Natural killer cell (primary cell): ENCODE measurements at regions of chr2 and their contacts with region 1.

Region 1: GRCh38 chr2:223993621-223994232 is 36.5 kb downstream of the MRPL44 start:
- DNase-seq: peak; percentile 35 to 84
- ATAC-seq: peak; percentile 77 to 91 (median 83)
- H3K4me3 ChIP-seq: no peak overlapping the region
- H3K4me3 Mint-ChIP-seq: no peak overlapping the region
- H3K27ac ChIP-seq: no peak overlapping the region
- H3K27ac Mint-ChIP-seq: no peak overlapping the region
- H3K4me1 ChIP-seq: no peaks in the 10 kb centered on the region
- H3K4me1 Mint-ChIP-seq: no peaks in the 10 kb centered on the region
- H3K27me3 ChIP-seq: no peaks in the 10 kb centered on the region
- H3K27me3 Mint-ChIP-seq: no peaks in the 10 kb centered on the region
- CTCF ChIP-seq: peak; percentile 70

Region 2: GRCh38 chr2:223123855-223124610 is 869.7 kb before region 1 on chr2:
- intact Hi-C with region 1: no loop called
- DNase-seq: no peak
- ATAC-seq: no peak
- H3K4me3 ChIP-seq: no peak overlapping the region
- H3K4me3 Mint-ChIP-seq: no peak overlapping the region
- H3K27ac ChIP-seq: no peak overlapping the region
- H3K27ac Mint-ChIP-seq: no peak overlapping the region
- H3K4me1 ChIP-seq: no peaks in the 10 kb centered on the region
- H3K4me1 Mint-ChIP-seq: no peaks in the 10 kb centered on the region
- H3K27me3 ChIP-seq: no peaks in the 10 kb centered on the region
- H3K27me3 Mint-ChIP-seq: no peaks in the 10 kb centered on the region
- CTCF ChIP-seq: no peak

Region 3: GRCh38 chr2:223970343-223971128 is 23.2 kb before region 1 on chr2:
- intact Hi-C with region 1: loop called (anchors 1 kb)
- DNase-seq: peak in 1 of 2 donors; percentile 82
- ATAC-seq: peak; percentile 73 to 79 (median 78)
- H3K4me3 ChIP-seq: no peak overlapping the region
- H3K4me3 Mint-ChIP-seq: no peak overlapping the region
- H3K27ac ChIP-seq: no peak overlapping the region
- H3K27ac Mint-ChIP-seq: peak overlapping the region in 1 of 2 donors; percentile 22
- H3K4me1 ChIP-seq: no peaks in the 10 kb centered on the region
- H3K4me1 Mint-ChIP-seq: peaks cover 9 to 11% of the 10 kb centered on the region in 2 donors
- H3K27me3 ChIP-seq: no peaks in the 10 kb centered on the region
- H3K27me3 Mint-ChIP-seq: no peaks in the 10 kb centered on the region
- CTCF ChIP-seq: peak; percentile 97

Region 4: GRCh38 chr2:224038049-224038829 is 44.5 kb after region 1 on chr2:
- intact Hi-C with region 1: loop called (anchors 1 kb)
- DNase-seq: peak; percentile 40 to 56
- ATAC-seq: peak; percentile 62 to 67 (median 65)
- H3K4me3 ChIP-seq: peak overlapping the region; percentile 46
- H3K4me3 Mint-ChIP-seq: peak overlapping the region; percentile 95
- H3K27ac ChIP-seq: no peak overlapping the region
- H3K27ac Mint-ChIP-seq: peak overlapping the region; percentile 22 to 71
- H3K4me1 ChIP-seq: peaks cover 15% of the 10 kb centered on the region
- H3K4me1 Mint-ChIP-seq: peaks cover 21 to 33% of the 10 kb centered on the region in 2 donors
- H3K27me3 ChIP-seq: peaks cover 6% of the 10 kb centered on the region
- H3K27me3 Mint-ChIP-seq: peaks cover 28 to 41% of the 10 kb centered on the region in 2 donors
- CTCF ChIP-seq: no peak

Region 5: DNA sequence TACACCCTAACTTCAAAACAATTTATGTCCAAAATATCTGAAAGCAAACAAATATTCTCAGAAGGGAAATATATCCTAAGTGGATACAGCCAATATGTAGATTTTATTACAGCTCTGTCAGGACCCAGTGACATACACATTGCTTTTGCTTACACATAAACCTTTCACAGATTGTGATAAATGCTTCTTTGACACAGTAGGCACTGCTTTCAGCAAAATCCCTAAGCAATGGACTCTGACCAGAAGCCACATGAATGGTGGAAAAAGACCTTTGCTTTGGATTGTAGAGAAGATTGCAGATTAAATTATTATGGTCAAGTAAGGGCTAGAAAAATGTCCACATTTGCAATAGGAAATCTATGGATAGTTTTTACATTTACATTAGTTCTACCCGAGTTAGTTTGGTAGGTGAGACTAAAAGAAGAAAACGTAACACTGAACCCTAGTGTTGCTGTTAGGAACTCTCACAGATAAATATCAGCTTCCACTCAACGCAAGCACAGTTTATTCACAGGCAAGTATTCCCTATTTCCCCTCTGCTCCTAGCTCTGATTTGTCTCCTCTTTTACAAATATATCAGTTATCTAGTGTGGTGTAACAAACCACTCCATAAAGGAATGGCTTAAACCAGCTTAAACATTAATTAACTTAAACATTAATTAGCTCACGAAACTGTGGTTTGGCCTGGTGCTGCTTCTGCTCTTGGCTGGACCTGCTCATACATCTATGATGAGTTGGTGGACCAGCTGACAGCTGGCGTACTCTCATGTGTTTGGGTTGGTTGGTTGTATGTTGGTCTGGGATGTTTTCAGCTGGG is 69.0 kb after region 1 on chr2:
- intact Hi-C with region 1: loop called (anchors 2 kb)
- DNase-seq: peak in 1 of 2 donors; percentile 12
- ATAC-seq: no peak
- H3K4me3 ChIP-seq: no peak overlapping the region
- H3K4me3 Mint-ChIP-seq: no peak overlapping the region
- H3K27ac ChIP-seq: no peak overlapping the region
- H3K27ac Mint-ChIP-seq: no peak overlapping the region
- H3K4me1 ChIP-seq: no peaks in the 10 kb centered on the region
- H3K4me1 Mint-ChIP-seq: no peaks in the 10 kb centered on the region
- H3K27me3 ChIP-seq: no peaks in the 10 kb centered on the region
- H3K27me3 Mint-ChIP-seq: peaks cover 1 to 2% of the 10 kb centered on the region in 2 donors
- CTCF ChIP-seq: no peak

Region 6: DNA sequence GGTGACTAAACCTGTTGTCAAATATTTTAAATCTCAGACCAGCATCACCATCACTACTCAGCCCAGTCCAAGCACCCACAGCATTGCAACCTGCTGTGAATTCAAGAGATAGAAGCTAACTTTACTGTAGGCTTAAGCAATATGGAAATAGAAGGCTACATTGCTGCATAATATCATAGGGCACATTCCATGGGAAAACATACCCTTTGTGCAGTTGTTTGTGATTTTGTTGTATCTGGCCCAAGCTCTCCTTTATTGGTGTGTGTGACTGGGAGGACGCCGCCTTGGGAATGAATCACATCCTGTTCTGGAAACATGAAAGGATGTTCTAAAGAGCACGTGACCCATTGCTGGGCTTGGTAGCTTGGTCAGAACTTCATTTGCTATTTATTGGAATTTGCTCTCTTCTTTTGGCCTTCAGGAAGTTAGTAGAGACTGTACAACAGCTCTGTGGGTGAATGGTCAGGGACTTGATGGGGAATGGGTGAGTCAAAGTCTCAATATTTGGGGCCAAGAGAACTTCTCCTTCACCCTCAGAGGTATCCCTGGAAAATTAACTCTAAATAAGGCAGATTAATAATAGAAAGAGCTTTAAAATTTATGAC is 152.1 kb after region 1 on chr2:
- intact Hi-C with region 1: loop called (anchors 10 kb)
- DNase-seq: no peak
- ATAC-seq: no peak
- H3K4me3 ChIP-seq: no peak overlapping the region
- H3K4me3 Mint-ChIP-seq: no peak overlapping the region
- H3K27ac ChIP-seq: no peak overlapping the region
- H3K27ac Mint-ChIP-seq: no peak overlapping the region
- H3K4me1 ChIP-seq: no peaks in the 10 kb centered on the region
- H3K4me1 Mint-ChIP-seq: no peaks in the 10 kb centered on the region
- H3K27me3 ChIP-seq: peaks cover 2% of the 10 kb centered on the region
- H3K27me3 Mint-ChIP-seq: peaks cover 12 to 28% of the 10 kb centered on the region in 2 donors
- CTCF ChIP-seq: no peak

Region 7: DNA sequence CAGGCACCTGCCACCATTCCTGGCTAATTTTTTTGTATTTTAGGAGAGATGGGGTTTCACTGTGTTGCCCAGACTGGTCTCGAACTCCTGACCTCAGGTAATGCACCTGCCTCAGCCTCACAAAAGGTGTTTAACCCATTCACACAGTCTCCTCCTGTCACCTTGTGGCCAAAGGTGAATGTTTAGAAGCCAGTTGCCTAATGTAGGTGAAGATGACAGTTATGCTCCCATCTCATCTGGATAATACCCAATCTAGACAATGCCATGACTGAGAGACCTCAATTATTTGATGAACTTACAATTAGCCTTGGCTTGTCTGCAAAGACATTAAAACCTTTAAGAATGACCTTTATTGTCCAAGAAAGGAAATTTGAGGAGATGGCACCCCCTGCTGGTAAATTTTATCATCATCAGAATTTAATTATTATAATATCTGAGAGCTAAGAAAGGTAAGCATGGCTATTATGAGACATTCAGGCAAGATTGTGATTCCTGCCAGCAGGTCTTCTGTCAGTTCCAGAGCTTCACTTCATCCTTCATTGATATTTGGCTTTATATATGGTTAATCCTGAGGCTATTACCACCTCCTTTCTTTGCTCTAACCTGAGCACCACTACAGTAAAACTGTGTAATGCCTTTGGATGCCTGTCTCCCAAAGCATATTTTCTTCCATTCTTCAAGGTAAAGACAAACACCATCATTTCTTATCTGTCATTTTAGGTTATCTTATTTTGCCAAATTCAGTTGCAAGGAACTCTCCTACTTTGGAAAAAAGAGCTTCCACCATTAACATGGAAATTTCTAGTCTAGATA is 290.6 kb after region 1 on chr2:
- intact Hi-C with region 1: loop called (anchors 1 kb)
- DNase-seq: peak in 1 of 2 donors; percentile 60
- ATAC-seq: peak in 1 of 3 donors; percentile 29
- H3K4me3 ChIP-seq: no peak overlapping the region
- H3K4me3 Mint-ChIP-seq: no peak overlapping the region
- H3K27ac ChIP-seq: no peak overlapping the region
- H3K27ac Mint-ChIP-seq: no peak overlapping the region
- H3K4me1 ChIP-seq: no peaks in the 10 kb centered on the region
- H3K4me1 Mint-ChIP-seq: no peaks in the 10 kb centered on the region
- H3K27me3 ChIP-seq: no peaks in the 10 kb centered on the region
- H3K27me3 Mint-ChIP-seq: peaks cover 19 to 44% of the 10 kb centered on the region in 2 donors
- CTCF ChIP-seq: peak; percentile 78

Region 8: GRCh38 chr2:224369028-224369632 is 375.4 kb after region 1 on chr2:
- intact Hi-C with region 1: loop called (anchors 5 kb)
- DNase-seq: peak in 1 of 2 donors; percentile 65
- ATAC-seq: peak; percentile 63 to 70 (median 65)
- H3K4me3 ChIP-seq: no peak overlapping the region
- H3K4me3 Mint-ChIP-seq: no peak overlapping the region
- H3K27ac ChIP-seq: no peak overlapping the region
- H3K27ac Mint-ChIP-seq: no peak overlapping the region
- H3K4me1 ChIP-seq: no peaks in the 10 kb centered on the region
- H3K4me1 Mint-ChIP-seq: no peaks in the 10 kb centered on the region
- H3K27me3 ChIP-seq: no peaks in the 10 kb centered on the region
- H3K27me3 Mint-ChIP-seq: peaks cover 0 to 7% of the 10 kb centered on the region in 2 donors
- CTCF ChIP-seq: peak; percentile 69